Sciatic nerve (tissue), 2 donors: ENCODE measurements at regions of chr22 and their contacts with region 1.

Region 1: DNA sequence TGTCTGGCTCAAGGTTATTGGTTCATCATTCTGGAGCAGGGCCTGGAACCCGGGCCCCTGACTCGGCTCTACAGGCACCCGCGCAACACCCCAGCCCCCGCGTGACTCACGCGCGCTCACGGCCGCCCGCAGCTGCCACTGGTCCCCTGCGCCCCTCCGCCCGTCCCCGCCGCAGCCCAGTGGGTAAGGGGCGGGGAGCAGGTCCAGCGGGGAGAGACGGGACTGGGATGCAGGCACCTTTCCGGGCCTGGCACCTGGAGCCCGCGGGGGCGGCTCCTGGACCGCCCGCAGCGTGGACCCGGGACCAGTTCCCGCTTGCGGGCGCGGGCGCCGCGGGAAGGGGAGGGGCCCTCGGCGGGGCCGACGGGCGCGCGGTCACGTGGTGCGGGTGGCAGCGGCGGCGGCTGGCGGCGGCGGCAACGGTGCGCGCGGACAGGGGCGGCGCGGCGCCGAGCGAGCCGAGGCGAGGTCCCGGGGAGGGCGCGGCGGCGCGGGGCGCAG is 7.2 kb downstream of the SEPTIN3 start:
- DNase-seq: peak; percentile 65
- ATAC-seq: no peak

Region 2: DNA sequence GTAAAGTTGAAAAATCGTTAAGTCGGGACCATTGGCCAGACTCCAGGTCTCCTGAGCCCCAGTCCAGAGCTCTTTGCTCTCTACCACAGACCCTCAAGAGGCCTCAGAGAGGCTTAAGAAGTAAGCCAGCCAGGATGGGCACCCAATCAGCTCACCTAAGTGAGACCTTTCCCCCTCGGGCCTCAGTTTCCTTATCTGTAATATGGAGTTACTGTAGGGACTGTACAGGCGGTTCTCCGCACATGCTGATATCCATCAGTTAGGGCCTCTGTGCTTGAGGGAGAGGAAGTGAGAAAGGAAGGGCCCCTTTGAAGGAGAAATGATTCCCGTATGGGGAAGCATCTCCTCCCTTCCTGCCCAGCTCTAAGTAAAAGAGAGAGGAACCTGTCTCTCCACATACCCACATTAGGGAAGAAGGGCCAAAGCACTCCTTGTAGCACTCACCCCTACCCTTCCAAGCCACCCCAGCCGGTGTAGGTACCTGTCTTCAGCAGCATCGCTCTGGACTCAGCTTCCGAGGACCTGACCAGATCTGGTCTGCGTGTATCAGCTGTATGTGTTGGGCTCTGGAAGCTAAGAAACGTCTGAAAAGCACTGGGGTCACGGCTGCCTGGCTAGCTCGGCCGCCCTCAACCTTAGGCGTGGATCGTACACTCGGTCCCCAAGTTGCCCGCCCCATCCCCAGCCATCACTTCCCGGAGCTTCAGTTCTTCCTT is 93.5 kb after region 1 on chr22:
- intact Hi-C with region 1: loop called (anchors 10 kb)
- DNase-seq: peak; percentile 53
- ATAC-seq: peak; percentile 18